Activated CD4-positive, alpha-beta T cell treated with anti-CD3 and anti-CD28 coated beads, Interleukin-2, amount 10 ng/mL, durations not matched to agents 24 days and 14 days (primary cell): ENCODE measurements at regions of chr18 and their contacts with region 1.

Region 1: GRCh38 chr18:71784777-71785176 is 759.4 kb downstream of the CBLN2 start:
- DNase-seq: no peak
- H3K4me3 Mint-ChIP-seq: no peak overlapping the region
- H3K27ac Mint-ChIP-seq: no peak overlapping the region
- H3K4me1 Mint-ChIP-seq: no peaks in the 10 kb centered on the region
- H3K27me3 Mint-ChIP-seq: no peaks in the 10 kb centered on the region

Region 2: DNA sequence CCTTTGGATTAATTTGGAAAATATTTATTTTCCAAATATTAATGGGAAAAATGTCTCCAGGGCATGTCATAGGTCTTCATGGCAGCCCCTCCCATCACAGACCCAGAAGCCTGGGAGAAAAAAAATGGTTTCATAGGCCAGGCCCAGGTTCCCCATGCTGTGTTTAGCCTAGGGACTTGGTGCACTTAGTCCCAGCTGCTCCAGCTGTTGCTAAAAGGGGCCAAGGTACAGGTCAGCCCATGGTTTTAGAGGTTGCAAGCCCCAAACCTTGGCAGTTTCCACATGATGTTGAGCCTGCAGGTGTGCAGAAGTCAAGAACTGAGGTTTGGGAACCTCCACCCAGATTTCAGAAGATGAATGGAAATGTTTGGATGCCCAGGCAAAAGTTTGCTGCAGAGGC is 1186.4 kb before region 1 on chr18:
- intact Hi-C with region 1: loop called (anchors 10 kb)
- DNase-seq: no peak
- H3K4me3 Mint-ChIP-seq: no peak overlapping the region
- H3K27ac Mint-ChIP-seq: no peak overlapping the region
- H3K4me1 Mint-ChIP-seq: no peaks in the 10 kb centered on the region
- H3K27me3 Mint-ChIP-seq: no peaks in the 10 kb centered on the region

Region 3: GRCh38 chr18:70781860-70782453 is 1002.8 kb before region 1 on chr18:
- intact Hi-C with region 1: loop called (anchors 5 kb)
- DNase-seq: peak; percentile 83
- H3K4me3 Mint-ChIP-seq: no peak overlapping the region
- H3K27ac Mint-ChIP-seq: no peak overlapping the region
- H3K4me1 Mint-ChIP-seq: no peaks in the 10 kb centered on the region
- H3K27me3 Mint-ChIP-seq: no peaks in the 10 kb centered on the region